ENCODE measurements at regions of chr18 and their contacts with region 1.

Region 1: DNA sequence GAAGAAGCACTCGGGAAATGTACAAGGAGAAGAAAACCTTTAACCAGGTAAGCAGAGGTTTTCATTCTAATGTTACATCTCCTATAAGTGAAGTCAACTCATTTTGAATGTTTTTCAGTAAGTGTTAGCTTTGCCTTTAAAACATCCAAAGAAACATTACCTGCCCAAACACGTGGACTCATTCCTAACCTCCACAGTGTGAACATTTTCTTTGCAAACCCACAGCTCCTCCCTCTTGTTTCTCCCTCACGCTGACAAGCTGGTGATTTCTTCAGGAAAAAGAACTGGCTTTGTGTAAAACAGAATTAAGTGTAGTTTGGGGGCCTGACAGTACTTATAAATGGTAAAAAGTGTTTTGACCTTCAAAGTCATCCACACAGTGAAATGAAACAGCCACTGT is 72.5 kb downstream of the MTCL1 start:
- DNase-seq: no peak
- ATAC-seq: no peak

Region 2: DNA sequence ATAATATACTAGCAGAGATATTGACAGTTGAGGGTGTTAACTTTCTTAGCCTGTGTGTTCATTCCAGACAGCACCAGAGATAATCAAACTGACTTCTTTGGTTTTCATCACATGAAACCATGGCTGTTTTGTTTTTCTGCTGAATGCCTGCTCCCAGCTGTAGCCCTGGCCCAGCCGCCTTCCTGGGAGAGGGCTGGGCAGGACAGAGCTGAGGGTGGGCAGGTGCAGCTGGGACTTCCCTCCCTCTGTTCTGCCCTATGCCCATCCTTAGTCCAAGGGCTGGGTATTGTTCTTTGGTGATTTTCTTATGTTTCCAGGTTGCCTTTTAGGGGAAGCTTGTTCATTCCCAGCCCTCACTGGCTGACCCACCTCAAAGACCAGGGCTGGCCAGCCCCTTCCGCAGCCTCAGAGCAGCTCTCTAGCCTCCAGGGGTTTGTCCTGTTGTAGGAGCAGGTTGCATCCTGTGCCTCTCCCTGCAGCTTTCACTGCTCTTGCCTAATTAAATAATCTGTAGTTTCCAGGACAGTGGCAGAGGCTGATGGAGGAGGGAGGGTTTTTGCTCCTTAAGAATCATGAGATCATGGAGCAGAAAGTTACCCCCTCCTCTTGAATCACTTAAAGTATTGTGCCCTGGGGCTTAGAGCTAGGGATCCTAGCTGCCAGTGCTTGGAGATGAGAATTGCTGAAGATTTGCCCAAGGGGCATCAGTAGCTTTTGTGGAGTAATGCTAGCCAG is 11.1 kb before region 1 on chr18:
- intact Hi-C with region 1: loop called (anchors 1 kb)
- DNase-seq: no peak
- ATAC-seq: peak; percentile 18

Measured in sciatic nerve (tissue), 2 donors.